ENCODE measurements at regions of chr10 and their contacts with region 1.

Region 1: GRCh38 chr10:117364110-117364960 is 10.9 kb downstream of the PDZD8 start:
- DNase-seq: peak; percentile 36
- ATAC-seq: no peak
- H3K4me3 ChIP-seq: no peak overlapping the region
- H3K27ac ChIP-seq: no peak overlapping the region
- H3K4me1 ChIP-seq: no peaks in the 10 kb centered on the region; the same call in none of the 2 replicates
- H3K27me3 ChIP-seq: no peaks in the 10 kb centered on the region
- CTCF ChIP-seq: no peak
- POLR2A ChIP-seq: no peak
- RAD21 ChIP-seq: no peak

Region 2: GRCh38 chr10:117375360-117376178 is 11.2 kb after region 1 on chr10 and contains the start of gene PDZD8:
- CTCF ChIA-PET with region 1: interaction called, 4 read pairs
- POLR2A ChIA-PET with region 1: no interaction called
- dilution Hi-C with region 1: no loop called
- in situ Hi-C with region 1: no loop called
- intact Hi-C with region 1: loop called (anchors 1 kb)
- DNase-seq: peak; percentile 90
- ATAC-seq: peak; percentile 90
- H3K4me3 ChIP-seq: peak within 1 kb of the TSS; percentile 96
- H3K27ac ChIP-seq: peak within 1 kb of the TSS; percentile 89
- H3K4me1 ChIP-seq: no peaks in the 10 kb centered on the region; the same call in 1 of the 2 replicates
- H3K27me3 ChIP-seq: peaks cover 14% of the 10 kb centered on the region
- CTCF ChIP-seq: 0 out of 2 replicates have a peak, but pooled peaks have one; percentile 0
- POLR2A ChIP-seq: peak; percentile 90
- RAD21 ChIP-seq: no peak
- total RNA-seq, gene PDZD8: 20.4 and 22.5 TPM in 2 replicates

Measured in IMR-90 (cell line).